ENCODE measurements at regions of chr19 and their contacts with region 1.

Region 1: GRCh38 chr19:37172368-37173366 is at the start of gene ZNF585A:
- DNase-seq: peak; percentile 77
- ATAC-seq: peak; percentile 99
- H3K4me3 Mint-ChIP-seq: peak within 1 kb of the TSS; percentile 52
- H3K27ac Mint-ChIP-seq: no peak within 1 kb of the TSS
- H3K4me1 Mint-ChIP-seq: peaks cover 4% of the 10 kb centered on the region
- H3K27me3 Mint-ChIP-seq: no peaks in the 10 kb centered on the region
- CTCF ChIP-seq: no peak
- total RNA-seq, gene ZNF585A: 14.4 and 17.0 TPM in 2 replicates

Region 2: DNA sequence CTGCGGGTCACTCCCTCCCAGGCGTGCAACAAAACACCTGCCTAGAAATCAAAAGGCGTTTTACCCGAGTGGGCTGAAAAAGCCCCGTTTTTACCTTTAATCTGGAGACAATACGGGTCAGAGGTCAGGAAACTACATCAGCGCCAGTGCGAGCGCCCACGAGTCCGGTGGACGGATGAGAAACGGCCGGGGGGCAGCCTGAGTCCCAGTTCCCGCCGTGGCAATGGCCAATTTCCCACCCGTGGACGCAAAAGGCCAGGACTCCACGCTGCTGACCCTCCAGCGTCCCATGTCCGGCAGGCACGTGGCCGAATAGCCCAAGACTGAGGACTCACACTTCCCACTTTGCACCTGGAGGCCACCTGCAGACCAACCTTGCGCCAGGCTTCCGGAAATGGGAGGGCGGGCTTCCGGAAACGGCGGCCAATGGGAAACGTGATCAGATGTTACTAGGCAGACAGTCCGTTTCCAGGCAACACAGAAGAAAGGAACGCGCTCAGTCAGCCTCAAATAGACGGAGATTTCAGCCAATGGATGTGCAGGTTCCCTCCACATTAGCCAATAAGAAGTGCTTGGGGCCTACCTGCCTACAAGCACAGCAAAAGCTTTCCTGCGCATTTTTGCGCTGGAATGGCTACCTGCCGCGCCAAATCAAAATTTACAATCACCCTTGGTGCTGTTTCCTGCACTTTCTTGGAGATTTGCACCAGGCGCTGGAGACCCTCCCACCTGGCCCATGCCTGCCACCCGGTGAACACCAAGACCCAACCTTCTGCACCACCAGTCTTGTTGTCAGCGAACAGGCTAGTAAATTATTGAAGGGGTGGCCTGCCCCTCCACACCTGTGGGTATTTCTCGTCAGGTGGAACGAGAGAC is 841.1 kb before region 1 on chr19:
- CTCF ChIA-PET with region 1: no interaction called
- POLR2A ChIA-PET with region 1: no interaction called
- intact Hi-C with region 1: loop called (anchors 5 kb)
- DNase-seq: peak; percentile 78
- ATAC-seq: peak; percentile 99
- H3K4me3 Mint-ChIP-seq: peak overlapping the region; percentile 86
- H3K27ac Mint-ChIP-seq: peak overlapping the region; percentile 76
- H3K4me1 Mint-ChIP-seq: peaks cover 26% of the 10 kb centered on the region
- H3K27me3 Mint-ChIP-seq: no peaks in the 10 kb centered on the region
- CTCF ChIP-seq: no peak

Region 3: DNA sequence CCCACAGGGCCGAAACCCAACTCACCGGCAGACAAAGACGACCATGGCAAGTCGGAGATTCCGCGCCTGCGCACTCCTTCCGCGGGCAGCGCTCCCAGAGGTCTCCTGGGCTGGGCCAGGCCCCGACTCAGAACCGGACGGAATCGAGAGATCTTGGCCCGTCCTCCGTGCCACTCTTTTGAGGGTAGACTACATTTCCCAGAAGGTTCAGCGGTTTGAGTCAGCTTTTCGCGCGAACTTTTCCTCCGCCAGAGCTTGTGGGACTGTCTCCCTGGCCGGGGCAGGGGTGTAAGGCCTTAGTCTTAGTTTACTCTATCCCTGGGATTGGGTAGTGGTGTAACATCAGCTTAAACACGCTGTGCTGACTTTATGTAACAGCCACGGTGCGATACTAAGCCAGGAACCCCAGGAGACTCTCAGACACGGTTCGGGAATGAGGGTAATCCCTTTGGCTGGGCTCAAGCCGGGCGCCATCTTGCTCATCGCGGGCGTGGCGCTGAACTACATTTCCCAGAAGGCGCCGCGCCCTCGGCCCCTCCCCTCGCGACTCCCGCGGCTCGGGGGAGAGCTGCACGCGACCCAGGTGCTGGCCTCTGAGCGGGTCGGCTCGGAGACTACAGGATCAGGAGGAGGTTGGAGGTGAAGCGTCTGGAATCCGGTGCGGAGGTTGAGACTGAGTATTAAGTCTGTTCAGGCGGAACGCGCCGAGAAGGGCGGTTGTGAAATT is 644.3 kb before region 1 on chr19 and contains the start of gene ZNF260:
- CTCF ChIA-PET with region 1: no interaction called
- POLR2A ChIA-PET with region 1: interaction called, 5 read pairs
- intact Hi-C with region 1: loop called (anchors 1 kb)
- DNase-seq: peak; percentile 94
- ATAC-seq: peak; percentile 89
- H3K4me3 Mint-ChIP-seq: peak within 1 kb of the TSS; percentile 99
- H3K27ac Mint-ChIP-seq: peak within 1 kb of the TSS; percentile 99
- H3K4me1 Mint-ChIP-seq: peaks cover 27% of the 10 kb centered on the region
- H3K27me3 Mint-ChIP-seq: no peaks in the 10 kb centered on the region
- CTCF ChIP-seq: no peak
- total RNA-seq, gene ZNF260: 9.8 and 13.6 TPM in 2 replicates

Region 4: DNA sequence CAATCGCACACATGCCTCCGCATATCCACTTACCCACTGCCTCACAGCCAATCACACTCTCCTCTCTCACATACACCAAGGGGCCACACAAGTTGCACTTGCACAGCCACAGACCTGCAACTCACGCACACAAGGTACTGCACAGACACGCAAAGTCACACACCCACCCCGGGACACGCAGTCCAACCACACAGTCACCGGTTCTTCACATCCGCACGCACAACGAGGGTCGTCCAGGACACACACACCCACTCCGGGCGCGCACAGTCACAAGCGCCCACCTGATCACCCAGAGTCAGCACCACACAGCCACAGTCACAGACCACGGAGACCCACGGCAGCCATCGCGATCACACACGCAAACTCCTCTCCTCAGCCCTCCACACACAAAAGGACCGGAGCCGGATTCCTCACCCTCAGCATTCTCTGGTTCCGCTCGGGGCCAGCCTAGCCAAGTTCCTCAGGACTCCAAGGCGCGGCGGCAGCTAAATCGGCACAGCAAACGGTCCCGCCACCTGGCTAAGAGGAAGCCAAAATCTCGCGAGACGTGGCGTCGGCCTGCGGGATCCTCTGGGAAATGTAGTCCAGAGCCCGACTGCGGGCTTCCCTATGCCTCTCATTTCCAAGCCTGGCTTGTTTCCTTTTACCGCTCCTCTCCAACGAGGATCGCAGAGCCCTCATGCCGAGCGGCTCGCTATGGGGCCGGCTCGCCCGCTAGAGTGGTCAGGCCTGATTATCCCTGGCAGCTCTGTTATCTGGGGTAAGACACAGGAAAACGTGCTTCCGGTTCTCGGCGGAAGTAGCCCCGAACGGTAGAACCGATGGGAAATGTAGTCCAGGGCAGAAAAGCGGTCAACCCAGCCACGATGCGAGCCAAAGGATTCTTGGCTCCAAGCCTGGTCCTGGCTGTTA is 400.1 kb before region 1 on chr19 and contains the start of gene ZNF850:
- CTCF ChIA-PET with region 1: no interaction called
- POLR2A ChIA-PET with region 1: interaction called, 3 read pairs
- intact Hi-C with region 1: loop called (anchors 1 kb)
- DNase-seq: peak; percentile 89
- ATAC-seq: peak; percentile 92
- H3K4me3 Mint-ChIP-seq: peak within 1 kb of the TSS; percentile 92
- H3K27ac Mint-ChIP-seq: peak within 1 kb of the TSS; percentile 85
- H3K4me1 Mint-ChIP-seq: peaks cover 24% of the 10 kb centered on the region
- H3K27me3 Mint-ChIP-seq: no peaks in the 10 kb centered on the region
- CTCF ChIP-seq: no peak
- total RNA-seq, gene ZNF850: 5.8 and 7.9 TPM in 2 replicates

Region 5: GRCh38 chr19:36915992-36916830 is 256.5 kb before region 1 on chr19 and contains the starts of genes ZNF568 and ZNF829:
- CTCF ChIA-PET with region 1: no interaction called
- POLR2A ChIA-PET with region 1: no interaction called
- intact Hi-C with region 1: loop called (anchors 1 kb)
- DNase-seq: peak; percentile 87
- ATAC-seq: peak; percentile 93
- H3K4me3 Mint-ChIP-seq: peak within 1 kb of the TSS; percentile 91
- H3K27ac Mint-ChIP-seq: peak within 1 kb of the TSS; percentile 91
- H3K4me1 Mint-ChIP-seq: peaks cover 26% of the 10 kb centered on the region
- H3K27me3 Mint-ChIP-seq: no peaks in the 10 kb centered on the region
- CTCF ChIP-seq: no peak
- total RNA-seq, gene ZNF568: 12.0 and 13.4 TPM in 2 replicates
- total RNA-seq, gene ZNF829: 7.3 and 7.6 TPM in 2 replicates

Region 6: DNA sequence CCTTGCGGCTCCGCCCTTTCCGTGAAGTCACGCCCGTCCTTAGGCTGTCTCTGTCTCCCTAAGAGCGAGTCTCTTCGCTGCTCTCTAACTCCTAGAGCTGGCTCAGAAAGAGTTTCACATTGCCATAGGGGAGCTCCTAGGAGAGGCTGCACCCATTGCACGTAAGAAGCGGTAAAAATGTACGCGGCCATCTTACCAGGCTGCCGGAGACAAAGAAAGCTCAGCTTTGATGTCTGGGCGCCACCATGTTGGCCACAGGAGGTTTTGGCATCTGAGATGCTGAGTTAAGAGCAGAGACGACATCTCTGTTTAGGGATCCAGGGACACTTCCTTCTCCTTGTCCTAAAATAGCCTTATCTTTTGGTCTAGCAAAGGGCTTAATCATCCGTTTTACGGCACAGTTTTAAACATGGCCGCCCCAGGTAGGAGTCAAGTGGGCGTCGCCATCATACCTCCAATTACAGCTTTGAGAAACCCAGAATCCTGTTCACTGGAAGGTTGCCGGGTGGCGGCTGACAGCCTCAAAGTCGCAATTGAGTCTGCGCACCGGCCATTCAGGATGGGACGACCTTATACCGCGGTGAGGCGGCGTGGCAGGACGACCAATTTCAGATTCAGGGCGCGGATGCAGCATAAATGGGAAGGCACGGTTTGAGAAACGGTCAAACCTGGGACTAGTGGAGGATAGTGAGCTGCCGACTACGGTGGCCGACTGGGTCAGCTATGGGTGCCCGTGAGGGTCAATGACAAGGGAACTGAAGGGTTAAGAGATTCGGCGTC is 333.9 kb after region 1 on chr19 and contains the start of gene ZNF793:
- CTCF ChIA-PET with region 1: no interaction called
- POLR2A ChIA-PET with region 1: no interaction called
- intact Hi-C with region 1: loop called (anchors 1 kb)
- DNase-seq: peak; percentile 70
- ATAC-seq: peak; percentile 87
- H3K4me3 Mint-ChIP-seq: no peak within 1 kb of the TSS
- H3K27ac Mint-ChIP-seq: no peak within 1 kb of the TSS
- H3K4me1 Mint-ChIP-seq: peaks cover 2% of the 10 kb centered on the region
- H3K27me3 Mint-ChIP-seq: no peaks in the 10 kb centered on the region
- CTCF ChIP-seq: no peak
- total RNA-seq, gene ZNF793: 8.4 and 8.7 TPM in 2 replicates

Region 7: DNA sequence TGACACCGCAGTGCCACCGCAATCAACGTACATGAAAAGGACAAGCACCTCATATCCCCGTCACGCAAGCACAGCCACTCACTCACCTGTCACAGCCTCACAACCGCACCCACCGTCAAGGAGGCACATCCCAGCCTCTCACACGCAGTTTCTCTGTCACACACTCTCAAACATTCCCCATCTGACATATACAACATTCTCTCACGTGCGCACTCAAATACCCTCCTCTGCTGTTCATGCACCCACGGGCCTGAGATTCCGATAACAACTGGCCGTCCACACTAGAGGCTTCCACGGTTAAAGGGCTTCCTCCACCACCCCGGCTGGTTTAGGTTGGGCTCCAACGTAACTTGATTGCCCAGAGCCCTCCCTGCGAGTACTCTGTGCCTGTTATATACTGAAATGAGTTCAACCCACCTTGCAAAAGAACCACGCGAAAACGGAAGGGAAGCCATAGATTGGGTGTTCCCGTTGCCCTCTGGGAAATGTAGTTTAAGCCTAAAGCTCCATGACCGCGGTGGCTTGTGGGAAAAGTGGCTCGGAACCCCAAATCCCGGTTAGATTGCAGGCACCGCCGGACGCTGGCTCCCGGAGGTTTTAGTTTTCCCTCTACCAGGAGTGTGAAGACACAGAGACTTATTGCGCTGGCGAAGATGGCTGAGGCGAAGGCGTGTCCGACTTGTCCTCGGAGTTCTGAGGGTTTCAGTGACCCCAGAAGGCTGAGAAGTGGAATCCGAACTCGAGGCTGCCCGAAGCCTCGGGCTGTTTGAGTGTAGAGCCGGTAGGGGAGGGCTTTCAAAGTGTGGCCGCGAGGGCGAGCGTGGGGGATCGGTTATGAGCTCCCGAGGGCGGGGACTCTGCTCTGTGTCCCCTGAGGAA is 606.7 kb after region 1 on chr19 and contains the start of gene ZNF573:
- CTCF ChIA-PET with region 1: no interaction called
- POLR2A ChIA-PET with region 1: no interaction called
- intact Hi-C with region 1: loop called (anchors 2 kb)
- DNase-seq: peak; percentile 70
- ATAC-seq: peak; percentile 86
- H3K4me3 Mint-ChIP-seq: peak within 1 kb of the TSS; percentile 91
- H3K27ac Mint-ChIP-seq: peak within 1 kb of the TSS; percentile 96
- H3K4me1 Mint-ChIP-seq: peaks cover 31% of the 10 kb centered on the region
- H3K27me3 Mint-ChIP-seq: no peaks in the 10 kb centered on the region
- CTCF ChIP-seq: no peak
- total RNA-seq, gene ZNF573: 18.7 and 19.8 TPM in 2 replicates